Right lobe of liver (tissue), 6 donors: ENCODE measurements at regions of chr12 and their contacts with region 1.

Region 1: GRCh38 chr12:61993734-61994345 is 266.4 kb upstream of the USP15 start:
- DNase-seq: no peak
- ATAC-seq: peak; percentile 91 to 97 (median 96)
- H3K4me3 ChIP-seq: no peak overlapping the region
- H3K27ac ChIP-seq: no peak overlapping the region
- H3K4me1 ChIP-seq: no peaks in the 10 kb centered on the region
- H3K27me3 ChIP-seq: no peaks in the 10 kb centered on the region
- CTCF ChIP-seq: peak; percentile 76 to 80 (median 78)
- POLR2A ChIP-seq: no peak

Region 2: GRCh38 chr12:61654698-61655097 is 339.1 kb before region 1 on chr12:
- intact Hi-C with region 1: loop called in 1 of 2 experiments (anchors 10 kb)
- DNase-seq: peak in 1 of 3 donors; percentile 48
- ATAC-seq: peak; percentile 88 to 95 (median 90)
- H3K4me3 ChIP-seq: no peak overlapping the region
- H3K27ac ChIP-seq: no peak overlapping the region
- H3K4me1 ChIP-seq: no peaks in the 10 kb centered on the region
- H3K27me3 ChIP-seq: no peaks in the 10 kb centered on the region
- CTCF ChIP-seq: peak; percentile 35 to 57 (median 48)
- POLR2A ChIP-seq: no peak

Region 3: DNA sequence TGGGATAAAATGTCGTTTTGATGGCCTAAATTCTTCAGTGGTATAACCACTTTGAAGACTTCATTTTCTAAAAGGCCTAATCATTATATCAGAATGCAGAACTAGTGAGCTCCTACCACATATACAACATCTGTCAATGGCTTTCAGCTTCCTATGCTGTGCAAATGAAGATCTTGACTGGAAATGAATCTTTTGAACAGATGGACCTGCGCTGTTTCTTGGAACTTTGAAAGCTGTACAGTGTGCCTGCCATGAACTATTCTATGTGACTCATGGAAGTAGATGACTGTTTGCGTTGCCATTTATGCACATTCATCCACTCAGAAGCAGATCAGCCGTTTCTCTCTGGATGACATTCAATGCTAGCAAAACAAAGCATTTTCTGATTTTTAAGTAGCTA is 275.9 kb before region 1 on chr12:
- intact Hi-C with region 1: no loop called
- DNase-seq: no peak
- ATAC-seq: no peak
- H3K4me3 ChIP-seq: no peak overlapping the region
- H3K27ac ChIP-seq: no peak overlapping the region
- H3K4me1 ChIP-seq: no peaks in the 10 kb centered on the region
- H3K27me3 ChIP-seq: no peaks in the 10 kb centered on the region
- CTCF ChIP-seq: no peak
- POLR2A ChIP-seq: no peak